H1 (cell line): ENCODE measurements at regions of chr20 and their contacts with region 1.

Region 1: GRCh38 chr20:19692685-19693119 is 65.4 kb upstream of the RIN2 start:
- DNase-seq: peak; percentile 19 to 90
- H3K4me3 ChIP-seq: peak overlapping the region in 1 of 4 experiments; percentile 30; a peak in 1 of 8 replicates
- H3K27ac ChIP-seq: no peak overlapping the region
- H3K4me1 ChIP-seq: peaks cover 0 to 4% (median under 1%) of the 10 kb centered on the region in 4 experiments; a peak in 2 of 7 replicates
- H3K27me3 ChIP-seq: no peaks in the 10 kb centered on the region
- CTCF ChIP-seq: peak; percentile 70 to 88 (median 84)
- EP300 ChIP-seq: no peak
- POLR2A ChIP-seq: no peak
- RAD21 ChIP-seq: peak; percentile 71 to 74

Region 2: GRCh38 chr20:19802492-19803158 is 109.9 kb after region 1 on chr20:
- CTCF ChIA-PET with region 1: interaction called, 10 read pairs
- POLR2A ChIA-PET with region 1: no interaction called
- DNase-seq: no peak
- H3K4me3 ChIP-seq: no peak overlapping the region
- H3K27ac ChIP-seq: no peak overlapping the region
- H3K4me1 ChIP-seq: no peaks in the 10 kb centered on the region
- H3K27me3 ChIP-seq: no peaks in the 10 kb centered on the region
- CTCF ChIP-seq: peak; percentile 40 to 95 (median 61)
- EP300 ChIP-seq: no peak
- POLR2A ChIP-seq: no peak
- RAD21 ChIP-seq: peak; percentile 53 to 71